ENCODE measurements at regions of chr13 and their contacts with region 1.

Region 1: DNA sequence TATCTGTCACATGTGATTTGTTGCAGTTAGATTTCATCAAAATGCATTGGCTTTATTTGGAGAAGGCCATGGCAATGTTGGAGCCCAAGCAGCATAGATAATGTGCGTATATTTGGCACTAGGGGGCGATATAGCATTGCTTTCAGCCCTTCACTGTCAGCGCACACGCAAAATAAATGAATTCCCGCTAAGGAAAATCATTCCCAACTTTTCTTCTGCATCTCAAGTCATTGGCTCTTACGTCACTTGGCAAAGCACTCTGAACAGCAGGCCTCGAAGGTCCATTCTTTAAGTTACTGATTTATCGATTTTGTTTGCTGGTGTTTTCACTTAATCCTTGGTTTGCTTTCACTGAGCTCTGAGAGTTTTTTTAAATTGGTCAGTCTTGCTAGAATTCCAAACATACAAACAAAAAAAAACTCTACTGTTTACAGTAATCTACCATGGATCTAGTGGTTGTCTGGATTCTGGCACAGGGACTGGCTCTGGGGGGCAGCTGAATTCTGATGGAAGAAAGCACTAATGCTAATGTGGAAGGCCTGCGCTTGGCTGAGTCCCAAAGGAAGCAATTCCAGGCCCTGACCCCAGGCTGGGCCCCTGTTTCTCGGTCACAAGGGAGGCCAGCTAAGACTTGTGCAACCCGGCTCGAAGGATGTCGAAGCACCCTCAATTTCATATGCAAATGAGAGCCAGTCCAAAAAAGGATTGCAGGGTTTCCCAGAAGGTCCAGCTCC is 97.7 kb upstream of the IPO5 start:
- DNase-seq: peak; percentile 78
- H3K4me3 ChIP-seq: no peak overlapping the region
- H3K27ac ChIP-seq: no peak overlapping the region
- H3K4me1 ChIP-seq: no peaks in the 10 kb centered on the region
- H3K27me3 ChIP-seq: no peaks in the 10 kb centered on the region
- CTCF ChIP-seq: peak; percentile 72 to 76
- POLR2A ChIP-seq: no peak

Region 2: DNA sequence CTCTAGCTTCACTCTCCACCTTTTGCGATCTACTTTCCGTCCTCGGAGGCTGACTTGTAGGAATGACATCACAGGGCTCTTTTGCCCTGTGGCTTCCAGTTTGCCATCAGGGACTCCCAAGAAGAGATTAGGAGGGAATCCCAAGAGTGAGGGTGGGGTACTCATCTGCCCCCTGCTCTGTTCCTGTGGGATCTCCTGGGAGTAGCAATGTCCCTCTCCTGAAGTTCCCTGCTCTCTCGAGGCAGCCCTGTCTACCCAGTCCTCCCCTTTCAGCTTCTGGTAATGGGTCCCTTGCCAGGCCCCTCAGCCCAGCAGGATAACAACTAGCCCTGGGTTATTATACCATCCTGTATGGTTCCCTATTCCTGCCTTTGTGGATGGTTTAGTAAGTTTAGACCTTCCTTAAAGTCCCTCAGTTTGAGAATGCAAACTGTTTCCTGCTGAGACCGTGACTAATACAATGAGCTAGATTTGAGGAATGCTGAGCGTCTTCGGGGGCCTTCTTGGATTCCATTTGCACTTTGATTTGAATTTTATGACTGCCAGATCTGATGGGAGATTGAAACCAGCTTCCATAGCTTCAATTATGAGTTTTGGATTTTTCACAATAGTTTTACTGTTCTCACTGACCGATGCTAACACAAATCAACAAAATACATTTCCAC is 24.0 kb after region 1 on chr13:
- CTCF ChIA-PET with region 1: interaction called, 16 read pairs
- POLR2A ChIA-PET with region 1: no interaction called
- dilution Hi-C with region 1: no loop called
- intact Hi-C with region 1: no loop called
- DNase-seq: peak; percentile 72
- H3K4me3 ChIP-seq: no peak overlapping the region
- H3K27ac ChIP-seq: peak overlapping the region; percentile 91
- H3K4me1 ChIP-seq: peaks cover 14% of the 10 kb centered on the region
- H3K27me3 ChIP-seq: no peaks in the 10 kb centered on the region
- CTCF ChIP-seq: no peak
- POLR2A ChIP-seq: no peak

Region 3: DNA sequence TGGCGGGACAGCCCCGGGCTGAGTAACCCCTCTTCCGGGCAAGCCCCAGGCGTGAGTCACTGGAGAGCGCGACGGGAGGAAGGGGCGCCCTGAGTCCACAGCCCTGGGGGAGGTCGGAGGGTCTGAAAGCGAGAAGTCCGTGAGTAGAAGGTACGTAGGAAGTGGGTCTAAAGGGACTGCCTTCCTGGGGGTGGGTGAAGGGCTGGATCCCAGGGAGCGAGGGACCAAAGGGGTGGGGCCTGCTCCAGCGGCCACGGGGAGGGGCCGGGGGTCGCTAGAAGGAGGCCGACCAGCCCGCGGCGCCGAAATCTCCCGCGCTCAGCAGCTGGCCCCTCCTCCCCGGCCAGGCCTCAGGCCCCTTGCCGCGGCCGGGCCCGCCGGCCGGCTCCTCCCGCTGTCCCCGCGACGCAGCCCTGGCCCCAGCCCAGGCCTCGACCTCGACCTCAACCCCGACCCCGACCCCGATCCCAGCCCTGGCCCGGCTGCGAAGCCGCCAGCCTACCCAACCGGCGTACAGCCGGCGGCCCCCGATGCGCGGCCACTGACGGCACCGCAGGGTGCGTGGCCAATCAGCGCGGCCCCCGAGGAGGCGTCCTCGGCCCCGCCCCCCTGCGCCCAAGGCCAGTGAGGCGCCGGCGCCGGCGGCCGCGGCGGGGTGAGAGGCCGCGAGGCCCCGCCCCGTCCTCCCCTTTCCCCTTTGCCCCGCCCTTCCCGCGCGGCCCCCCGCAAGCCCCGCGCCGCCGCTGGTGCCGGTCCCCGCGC is 120.3 kb after region 1 on chr13:
- CTCF ChIA-PET with region 1: interaction called, 15 read pairs
- POLR2A ChIA-PET with region 1: no interaction called
- dilution Hi-C with region 1: no loop called
- intact Hi-C with region 1: loop called (anchors 1 kb)
- DNase-seq: peak; percentile 85
- H3K4me3 ChIP-seq: peak overlapping the region; percentile 53 to 91 (median 66)
- H3K27ac ChIP-seq: peak overlapping the region; percentile 74
- H3K4me1 ChIP-seq: peaks cover 26% of the 10 kb centered on the region
- H3K27me3 ChIP-seq: no peaks in the 10 kb centered on the region
- CTCF ChIP-seq: no peak
- POLR2A ChIP-seq: peak; percentile 90

Region 4: GRCh38 chr13:98068521-98068920 is 212.8 kb after region 1 on chr13:
- CTCF ChIA-PET with region 1: no interaction called
- POLR2A ChIA-PET with region 1: no interaction called
- dilution Hi-C with region 1: no loop called
- intact Hi-C with region 1: no loop called
- DNase-seq: no peak
- H3K4me3 ChIP-seq: no peak overlapping the region
- H3K27ac ChIP-seq: no peak overlapping the region
- H3K4me1 ChIP-seq: no peaks in the 10 kb centered on the region
- H3K27me3 ChIP-seq: peaks cover 0 to 2% of the 10 kb centered on the region in 2 experiments
- CTCF ChIP-seq: no peak
- POLR2A ChIP-seq: no peak

Region 5: GRCh38 chr13:98142380-98143156 is 286.8 kb after region 1 on chr13 and contains the start of gene FARP1:
- CTCF ChIA-PET with region 1: interaction called, 6 read pairs
- POLR2A ChIA-PET with region 1: no interaction called
- dilution Hi-C with region 1: no loop called
- intact Hi-C with region 1: loop called (anchors 1 kb)
- DNase-seq: peak; percentile 55
- H3K4me3 ChIP-seq: peak within 1 kb of the TSS; percentile 76 to 88 (median 81)
- H3K27ac ChIP-seq: peak within 1 kb of the TSS; percentile 30
- H3K4me1 ChIP-seq: peaks cover 12% of the 10 kb centered on the region
- H3K27me3 ChIP-seq: peaks cover 7 to 9% of the 10 kb centered on the region in 2 experiments
- CTCF ChIP-seq: peak; percentile 19 to 32
- POLR2A ChIP-seq: no peak
- total RNA-seq, gene FARP1: 73.5 and 77.7 TPM in 2 replicates

Region 6: DNA sequence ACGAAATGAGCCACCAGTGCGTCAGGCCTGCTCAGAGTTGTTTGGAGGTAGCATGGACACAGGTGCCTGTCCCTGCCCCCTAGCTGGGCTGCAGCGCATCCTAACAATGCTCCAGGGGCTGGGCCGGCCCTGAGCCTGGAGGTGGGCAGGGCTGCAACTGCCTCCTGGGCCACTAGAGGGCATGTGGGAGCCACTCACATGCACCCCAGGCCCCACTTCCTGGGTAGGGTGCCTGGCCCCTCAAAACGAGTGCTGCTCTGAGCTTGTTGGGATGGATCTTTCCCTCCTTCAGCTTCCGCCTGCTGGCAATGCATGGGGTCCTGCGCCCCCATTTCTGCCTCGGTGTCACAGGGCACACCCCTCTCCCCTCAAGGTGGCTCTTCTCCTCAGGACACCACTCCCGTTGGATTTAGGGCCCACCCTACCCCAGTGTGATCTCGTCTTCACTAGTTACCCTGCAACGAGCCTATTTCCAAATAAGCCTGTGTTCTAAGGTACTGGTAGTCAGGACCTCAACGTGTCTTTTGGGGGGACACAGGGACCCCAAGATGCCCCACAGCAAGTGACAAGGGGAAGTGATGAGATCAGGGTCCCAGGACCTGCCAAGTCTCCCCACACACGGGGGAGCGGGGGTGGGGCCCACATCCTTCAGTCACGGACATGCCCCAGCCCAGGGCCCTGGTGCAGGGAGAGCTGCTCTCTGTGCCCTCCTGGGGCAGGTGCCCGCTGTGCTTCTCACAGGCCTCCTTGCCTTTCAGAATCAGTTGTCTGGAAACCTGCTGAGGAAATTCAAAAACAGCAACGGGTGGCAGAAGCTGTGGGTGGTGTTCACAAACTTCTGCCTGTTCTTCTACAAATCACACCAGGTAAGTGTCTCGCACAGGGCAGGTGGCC is 589.9 kb after region 1 on chr13:
- CTCF ChIA-PET with region 1: interaction called, 11 read pairs
- POLR2A ChIA-PET with region 1: no interaction called
- dilution Hi-C with region 1: no loop called
- intact Hi-C with region 1: loop called (anchors 5 kb)
- DNase-seq: peak; percentile 64
- H3K4me3 ChIP-seq: no peak overlapping the region
- H3K27ac ChIP-seq: no peak overlapping the region
- H3K4me1 ChIP-seq: no peaks in the 10 kb centered on the region
- H3K27me3 ChIP-seq: no peaks in the 10 kb centered on the region
- CTCF ChIP-seq: peak; percentile 93 to 99
- POLR2A ChIP-seq: no peak

Measured in endothelial cell of umbilical vein (primary cell).